Motor neuron (in vitro differentiated cells): ENCODE measurements at regions of chr11 and their contacts with region 1.

Region 1: GRCh38 chr11:112784323-112785073 is 176.7 kb upstream of the NCAM1 start:
- ATAC-seq: peak; percentile 72 to 98 (median 92)
- H3K4me3 ChIP-seq: no peak overlapping the region
- H3K27ac ChIP-seq: peak overlapping the region; percentile 41 to 53
- H3K4me1 ChIP-seq: peaks cover 12 to 13% of the 10 kb centered on the region in 2 donors

Region 2: DNA sequence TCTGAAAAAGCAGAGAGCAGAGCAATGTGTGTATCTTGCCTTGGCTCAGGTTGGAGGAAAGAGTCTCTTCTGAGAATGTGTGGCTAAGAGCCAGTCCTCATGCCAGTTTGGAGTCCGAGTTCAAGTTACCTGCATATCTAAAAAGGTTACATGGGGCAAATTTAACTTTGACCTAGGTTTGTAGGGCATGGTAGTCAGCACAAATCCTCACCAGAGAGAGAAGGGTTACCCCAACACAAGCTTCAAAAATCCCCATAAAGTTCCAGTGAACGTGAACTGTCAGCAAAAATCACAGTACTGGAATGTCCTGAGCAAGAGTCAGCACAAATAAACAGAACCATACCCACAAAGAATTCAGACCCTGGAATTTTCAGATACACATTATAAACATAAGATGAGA is 684.0 kb before region 1 on chr11:
- in situ Hi-C with region 1: no loop called
- ATAC-seq: no peak
- H3K4me3 ChIP-seq: no peak overlapping the region
- H3K27ac ChIP-seq: no peak overlapping the region
- H3K4me1 ChIP-seq: no peaks in the 10 kb centered on the region

Region 3: DNA sequence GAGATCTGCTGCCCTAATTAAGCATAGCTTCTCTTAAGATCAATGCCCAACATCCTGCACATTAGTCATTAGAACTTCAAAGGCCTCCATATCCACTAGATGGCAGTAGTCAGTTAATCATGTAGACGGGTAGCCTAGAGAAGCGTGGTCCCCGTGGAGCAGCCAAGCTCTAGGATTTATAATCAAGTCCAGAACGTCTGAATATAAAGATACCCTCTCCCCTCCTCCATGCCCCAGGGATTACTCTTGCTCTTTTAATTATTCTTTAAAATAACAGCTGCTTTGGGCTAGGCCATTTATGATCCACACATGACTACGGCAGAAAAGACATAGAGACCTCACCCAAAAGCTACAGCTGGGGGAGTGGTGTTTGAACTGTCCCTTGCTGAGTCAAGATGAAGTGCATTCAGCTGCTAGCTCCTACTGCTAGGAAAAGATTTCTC is 196.2 kb before region 1 on chr11:
- in situ Hi-C with region 1: loop called in 1 of 9 experiments (anchors 10 kb)
- ATAC-seq: peak; percentile 87 to 98 (median 95)
- H3K4me3 ChIP-seq: no peak overlapping the region
- H3K27ac ChIP-seq: peak overlapping the region; percentile 31 to 47
- H3K4me1 ChIP-seq: peaks cover 37 to 43% of the 10 kb centered on the region in 2 donors